Endothelial cell of umbilical vein (primary cell): ENCODE measurements at regions of chr6 and their contacts with region 1.

Region 1: GRCh38 chr6:54244430-54244829 is 63.8 kb upstream of the TINAG start:
- DNase-seq: peak; percentile 59
- H3K4me3 ChIP-seq: no peak overlapping the region
- H3K27ac ChIP-seq: no peak overlapping the region
- H3K4me1 ChIP-seq: no peaks in the 10 kb centered on the region
- H3K27me3 ChIP-seq: no peaks in the 10 kb centered on the region
- CTCF ChIP-seq: peak; percentile 40 to 41
- POLR2A ChIP-seq: no peak

Region 2: GRCh38 chr6:54043360-54043759 is 201.1 kb before region 1 on chr6:
- CTCF ChIA-PET with region 1: no interaction called
- POLR2A ChIA-PET with region 1: no interaction called
- dilution Hi-C with region 1: no loop called
- intact Hi-C with region 1: no loop called
- DNase-seq: no peak
- H3K4me3 ChIP-seq: no peak overlapping the region
- H3K27ac ChIP-seq: no peak overlapping the region
- H3K4me1 ChIP-seq: no peaks in the 10 kb centered on the region
- H3K27me3 ChIP-seq: no peaks in the 10 kb centered on the region
- CTCF ChIP-seq: no peak
- POLR2A ChIP-seq: no peak

Region 3: GRCh38 chr6:54191461-54191860 is 53.0 kb before region 1 on chr6:
- CTCF ChIA-PET with region 1: interaction called, 8 read pairs
- POLR2A ChIA-PET with region 1: interaction called, 3 read pairs
- dilution Hi-C with region 1: no loop called
- intact Hi-C with region 1: loop called (anchors 5 kb)
- DNase-seq: peak; percentile 79
- H3K4me3 ChIP-seq: no peak overlapping the region
- H3K27ac ChIP-seq: no peak overlapping the region
- H3K4me1 ChIP-seq: peaks cover 25% of the 10 kb centered on the region
- H3K27me3 ChIP-seq: no peaks in the 10 kb centered on the region
- CTCF ChIP-seq: no peak
- POLR2A ChIP-seq: no peak

Region 4: DNA sequence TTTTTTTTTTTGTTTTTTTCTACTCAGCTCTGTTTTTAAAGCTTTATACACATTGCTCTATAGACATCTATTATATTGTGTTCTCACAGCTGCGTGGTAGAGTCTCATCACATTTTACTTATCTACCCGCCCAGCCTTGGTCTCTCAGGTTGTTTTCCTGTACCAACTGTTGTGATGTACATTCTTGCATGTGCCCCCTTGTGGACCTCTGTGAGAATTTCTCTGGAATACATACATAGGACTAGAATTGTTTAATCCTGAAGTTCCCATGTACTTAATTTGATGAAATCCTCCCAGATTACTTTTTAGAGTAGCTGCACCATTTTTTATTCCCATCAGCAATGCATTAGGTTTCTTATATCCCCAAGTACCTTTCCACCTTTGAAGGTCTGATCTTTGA is 23.4 kb after region 1 on chr6:
- CTCF ChIA-PET with region 1: interaction called, 48 read pairs
- POLR2A ChIA-PET with region 1: no interaction called
- dilution Hi-C with region 1: no loop called
- intact Hi-C with region 1: no loop called
- DNase-seq: peak; percentile 65
- H3K4me3 ChIP-seq: no peak overlapping the region
- H3K27ac ChIP-seq: no peak overlapping the region
- H3K4me1 ChIP-seq: peaks cover 7% of the 10 kb centered on the region
- H3K27me3 ChIP-seq: no peaks in the 10 kb centered on the region
- CTCF ChIP-seq: peak; percentile 44 to 48
- POLR2A ChIP-seq: no peak

Region 5: DNA sequence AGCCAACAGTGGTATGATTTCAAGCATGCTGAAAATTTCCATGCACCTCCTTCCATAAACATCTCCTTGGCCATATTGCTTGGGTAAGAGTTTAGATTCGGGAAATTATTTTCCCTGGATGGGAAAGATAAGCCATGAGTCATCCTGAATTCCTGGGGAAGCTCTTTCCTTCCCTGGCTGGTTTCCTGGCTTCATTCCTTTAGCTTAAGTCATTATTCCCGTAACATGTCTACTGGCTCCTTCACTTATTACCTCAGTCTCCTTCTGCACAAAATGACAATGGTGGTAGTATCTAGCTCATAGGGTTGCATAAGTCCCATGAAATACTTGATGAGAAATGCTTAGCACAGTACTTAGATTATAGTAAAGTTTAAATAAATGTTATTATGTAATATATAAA is 91.4 kb after region 1 on chr6:
- CTCF ChIA-PET with region 1: interaction called, 14 read pairs
- POLR2A ChIA-PET with region 1: no interaction called
- dilution Hi-C with region 1: no loop called
- intact Hi-C with region 1: no loop called
- DNase-seq: peak; percentile 99
- H3K4me3 ChIP-seq: no peak overlapping the region
- H3K27ac ChIP-seq: peak overlapping the region; percentile 94
- H3K4me1 ChIP-seq: peaks cover 28% of the 10 kb centered on the region
- H3K27me3 ChIP-seq: no peaks in the 10 kb centered on the region
- CTCF ChIP-seq: no peak
- POLR2A ChIP-seq: peak; percentile 90

Region 6: GRCh38 chr6:54717849-54718455 is 473.5 kb after region 1 on chr6:
- CTCF ChIA-PET with region 1: interaction called, 10 read pairs
- POLR2A ChIA-PET with region 1: no interaction called
- dilution Hi-C with region 1: no loop called
- intact Hi-C with region 1: no loop called
- DNase-seq: peak; percentile 61
- H3K4me3 ChIP-seq: no peak overlapping the region
- H3K27ac ChIP-seq: no peak overlapping the region
- H3K4me1 ChIP-seq: no peaks in the 10 kb centered on the region
- H3K27me3 ChIP-seq: peaks cover 0 to 2% of the 10 kb centered on the region in 2 experiments
- CTCF ChIP-seq: peak; percentile 64 to 76
- POLR2A ChIP-seq: no peak